H1 (cell line): ENCODE measurements at regions of chr12 and their contacts with region 1.

Region 1: DNA sequence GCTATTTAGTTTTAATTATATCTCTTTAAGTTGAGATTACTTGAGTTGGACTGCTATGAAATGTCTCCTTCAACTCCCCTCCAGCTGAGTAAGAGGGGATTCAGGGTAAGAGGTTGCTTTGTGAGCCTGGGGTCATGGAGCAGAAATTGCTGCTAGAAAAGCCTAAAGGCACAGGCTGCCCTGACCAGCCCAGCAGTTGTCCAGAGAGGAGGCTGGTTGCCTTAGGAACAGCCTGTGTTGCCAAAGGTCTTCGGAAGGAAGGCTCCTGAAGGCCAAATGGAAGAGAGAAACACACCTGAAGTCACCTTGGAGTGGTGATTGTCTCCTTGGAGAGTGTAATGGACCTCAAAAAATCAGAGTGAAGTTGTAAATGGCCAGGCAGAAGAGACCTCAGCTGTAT is 235.5 kb upstream of the PDE3A start:
- DNase-seq: no peak
- H3K4me3 ChIP-seq: no peak overlapping the region
- H3K27ac ChIP-seq: no peak overlapping the region
- H3K4me1 ChIP-seq: no peaks in the 10 kb centered on the region
- H3K27me3 ChIP-seq: no peaks in the 10 kb centered on the region
- CTCF ChIP-seq: no peak
- EP300 ChIP-seq: no peak
- POLR2A ChIP-seq: no peak
- RAD21 ChIP-seq: no peak

Region 2: DNA sequence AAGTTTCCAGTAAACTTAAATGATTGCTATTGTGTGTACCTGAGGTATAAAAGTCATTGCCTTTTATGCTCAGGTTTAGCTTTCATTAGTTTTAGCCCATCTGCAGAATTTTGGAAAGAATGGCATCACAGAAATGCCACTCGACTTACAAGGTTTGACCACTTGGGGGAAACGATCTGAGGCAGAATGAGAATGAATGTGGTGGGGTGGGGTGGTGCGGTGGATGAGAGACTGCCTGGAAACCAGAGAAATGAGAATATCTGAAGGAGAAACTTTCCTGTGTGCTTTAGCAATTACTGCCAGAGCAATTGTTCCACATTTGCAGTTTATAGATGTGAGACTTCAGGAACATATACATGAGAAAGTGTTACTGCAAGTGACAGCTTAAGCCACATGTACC is 10.1 kb after region 1 on chr12:
- CTCF ChIA-PET with region 1: interaction called, 12 read pairs
- POLR2A ChIA-PET with region 1: no interaction called
- DNase-seq: no peak
- H3K4me3 ChIP-seq: no peak overlapping the region
- H3K27ac ChIP-seq: no peak overlapping the region
- H3K4me1 ChIP-seq: no peaks in the 10 kb centered on the region; a peak in 1 of 7 replicates
- H3K27me3 ChIP-seq: no peaks in the 10 kb centered on the region
- CTCF ChIP-seq: peak; percentile 28 to 51 (median 51)
- EP300 ChIP-seq: no peak
- POLR2A ChIP-seq: no peak
- RAD21 ChIP-seq: peak; percentile 31 to 55; a peak in 2 of 4 replicates

Region 3: DNA sequence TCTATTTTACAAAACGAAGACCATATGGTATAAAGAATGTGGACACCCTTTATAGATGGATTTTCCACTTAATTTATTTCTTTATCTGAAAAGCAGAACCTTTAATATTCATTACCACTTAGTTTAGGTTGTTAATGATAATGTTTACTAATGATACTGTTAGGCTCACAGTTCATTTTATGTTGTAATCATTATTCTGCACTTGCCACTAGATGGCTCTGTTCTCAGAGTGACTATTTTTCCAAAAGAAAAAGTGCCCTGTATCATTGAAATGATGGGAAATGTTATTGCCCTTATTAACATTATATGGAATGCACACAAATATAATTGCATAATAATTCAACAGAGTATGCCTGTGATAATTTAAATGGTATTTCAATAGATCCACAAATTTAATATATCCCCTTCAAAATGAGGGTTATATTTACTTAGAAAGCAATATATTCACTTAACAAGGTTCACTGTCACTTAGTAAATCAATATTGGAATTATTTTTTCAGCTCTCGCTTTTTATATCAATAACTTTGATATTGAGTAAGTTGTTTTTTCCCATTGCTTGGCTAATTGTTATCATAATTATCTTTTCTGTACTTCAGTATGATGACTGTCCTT is 331.2 kb after region 1 on chr12:
- CTCF ChIA-PET with region 1: no interaction called
- POLR2A ChIA-PET with region 1: no interaction called
- DNase-seq: no peak
- H3K4me3 ChIP-seq: no peak overlapping the region
- H3K27ac ChIP-seq: no peak overlapping the region
- H3K4me1 ChIP-seq: no peaks in the 10 kb centered on the region
- H3K27me3 ChIP-seq: no peaks in the 10 kb centered on the region
- CTCF ChIP-seq: peak in 2 of 3 experiments; percentile 25 to 57; a peak in 2 of 4 replicates
- EP300 ChIP-seq: no peak
- POLR2A ChIP-seq: no peak
- RAD21 ChIP-seq: peak; percentile 29 to 38